T-cell (primary cell): ENCODE measurements at regions of chr12 and their contacts with region 1.

Region 1: GRCh38 chr12:6884539-6884938 is 11.4 kb upstream of the SPSB2 start:
- DNase-seq: no peak
- ATAC-seq: no peak
- H3K4me3 ChIP-seq: no peak overlapping the region
- H3K4me3 Mint-ChIP-seq: no peak overlapping the region
- H3K27ac ChIP-seq: no peak overlapping the region
- H3K27ac Mint-ChIP-seq: no peak overlapping the region
- H3K4me1 ChIP-seq: no peaks in the 10 kb centered on the region
- H3K4me1 Mint-ChIP-seq: no peaks in the 10 kb centered on the region
- H3K27me3 ChIP-seq: no peaks in the 10 kb centered on the region
- H3K27me3 Mint-ChIP-seq: no peaks in the 10 kb centered on the region

Region 2: GRCh38 chr12:6861391-6861790 is 23.1 kb before region 1 on chr12:
- CTCF ChIA-PET with region 1: no interaction called
- POLR2A ChIA-PET with region 1: no interaction called
- DNase-seq: no peak
- ATAC-seq: no peak
- H3K4me3 ChIP-seq: no peak overlapping the region
- H3K4me3 Mint-ChIP-seq: no peak overlapping the region
- H3K27ac ChIP-seq: no peak overlapping the region
- H3K27ac Mint-ChIP-seq: no peak overlapping the region
- H3K4me1 ChIP-seq: peaks cover 0 to 3% of the 10 kb centered on the region in 2 experiments
- H3K4me1 Mint-ChIP-seq: peaks cover under 1 to 3% (median 3%) of the 10 kb centered on the region in 3 donors
- H3K27me3 ChIP-seq: no peaks in the 10 kb centered on the region
- H3K27me3 Mint-ChIP-seq: no peaks in the 10 kb centered on the region

Region 3: DNA sequence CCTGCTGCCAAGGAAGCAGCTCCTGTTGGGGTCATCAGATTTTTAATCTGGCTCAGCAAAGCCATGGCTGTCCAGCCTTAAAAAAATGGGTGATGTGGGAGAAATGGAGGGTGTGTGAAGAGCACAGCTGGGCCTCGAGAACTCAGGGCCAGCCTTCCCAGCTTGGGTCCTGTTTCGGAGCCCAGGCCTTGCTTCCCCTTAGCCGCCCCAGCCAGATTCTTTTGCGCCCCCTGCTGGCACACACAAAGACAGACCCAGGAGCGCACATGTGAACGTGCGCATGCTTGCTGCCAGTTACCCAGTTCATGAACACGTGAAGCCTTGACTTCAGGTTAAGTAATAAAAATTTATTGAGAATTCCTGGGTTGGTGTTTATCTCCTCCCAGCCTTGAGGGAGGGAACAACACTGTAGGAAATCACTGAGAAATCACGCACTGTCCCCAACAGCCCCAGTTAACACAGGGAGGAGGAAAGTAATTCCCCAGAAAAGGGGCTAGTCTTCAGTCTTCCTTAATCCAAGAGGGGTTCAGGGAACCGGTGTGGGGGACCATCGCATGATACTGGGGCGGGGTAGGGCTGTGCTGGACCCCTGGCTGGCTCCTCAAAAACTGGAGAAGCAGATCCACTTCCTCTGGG is 80.6 kb after region 1 on chr12:
- CTCF ChIA-PET with region 1: interaction called in 1 of 2 experiments, 12 read pairs
- POLR2A ChIA-PET with region 1: no interaction called
- DNase-seq: peak; percentile 73 to 95 (median 84)
- ATAC-seq: peak; percentile 43 to 52 (median 49)
- H3K4me3 ChIP-seq: no peak overlapping the region
- H3K4me3 Mint-ChIP-seq: no peak overlapping the region
- H3K27ac ChIP-seq: peak overlapping the region; percentile 69
- H3K27ac Mint-ChIP-seq: peak overlapping the region; percentile 83 to 87
- H3K4me1 ChIP-seq: peaks cover 30 to 72% of the 10 kb centered on the region in 2 experiments
- H3K4me1 Mint-ChIP-seq: peaks cover 44 to 62% (median 55%) of the 10 kb centered on the region in 3 donors
- H3K27me3 ChIP-seq: no peaks in the 10 kb centered on the region
- H3K27me3 Mint-ChIP-seq: no peaks in the 10 kb centered on the region